ENCODE measurements at regions of chr10 and their contacts with region 1.

Region 1: GRCh38 chr10:128011175-128011979 is 104.5 kb downstream of the PTPRE start:
- DNase-seq: peak; percentile 95
- H3K4me3 ChIP-seq: peak overlapping the region in 1 of 2 experiments; percentile 22; a peak in 2 of 4 replicates
- H3K27ac ChIP-seq: no peak overlapping the region
- H3K4me1 ChIP-seq: peaks cover 0 to 7% of the 10 kb centered on the region in 2 experiments; a peak in 1 of 4 replicates
- H3K27me3 ChIP-seq: no peaks in the 10 kb centered on the region
- CTCF ChIP-seq: peak; percentile 96
- EP300 ChIP-seq: no peak
- RAD21 ChIP-seq: peak; percentile 97

Region 2: GRCh38 chr10:127715782-127716378 is 295.5 kb before region 1 on chr10:
- CTCF ChIA-PET with region 1: interaction called, 16 read pairs
- POLR2A ChIA-PET with region 1: no interaction called
- DNase-seq: peak; percentile 32
- H3K4me3 ChIP-seq: no peak overlapping the region; a peak in 1 of 4 replicates
- H3K27ac ChIP-seq: no peak overlapping the region
- H3K4me1 ChIP-seq: no peaks in the 10 kb centered on the region
- H3K27me3 ChIP-seq: no peaks in the 10 kb centered on the region
- CTCF ChIP-seq: peak; percentile 51
- EP300 ChIP-seq: no peak
- RAD21 ChIP-seq: peak; percentile 65

Region 3: GRCh38 chr10:127840884-127841283 is 170.5 kb before region 1 on chr10:
- CTCF ChIA-PET with region 1: no interaction called
- POLR2A ChIA-PET with region 1: no interaction called
- DNase-seq: no peak
- H3K4me3 ChIP-seq: no peak overlapping the region
- H3K27ac ChIP-seq: no peak overlapping the region
- H3K4me1 ChIP-seq: no peaks in the 10 kb centered on the region; a peak in 1 of 4 replicates
- H3K27me3 ChIP-seq: peaks cover 6% of the 10 kb centered on the region; the same call in 1 of the 2 replicates
- CTCF ChIP-seq: no peak
- EP300 ChIP-seq: no peak
- RAD21 ChIP-seq: no peak

Region 4: DNA sequence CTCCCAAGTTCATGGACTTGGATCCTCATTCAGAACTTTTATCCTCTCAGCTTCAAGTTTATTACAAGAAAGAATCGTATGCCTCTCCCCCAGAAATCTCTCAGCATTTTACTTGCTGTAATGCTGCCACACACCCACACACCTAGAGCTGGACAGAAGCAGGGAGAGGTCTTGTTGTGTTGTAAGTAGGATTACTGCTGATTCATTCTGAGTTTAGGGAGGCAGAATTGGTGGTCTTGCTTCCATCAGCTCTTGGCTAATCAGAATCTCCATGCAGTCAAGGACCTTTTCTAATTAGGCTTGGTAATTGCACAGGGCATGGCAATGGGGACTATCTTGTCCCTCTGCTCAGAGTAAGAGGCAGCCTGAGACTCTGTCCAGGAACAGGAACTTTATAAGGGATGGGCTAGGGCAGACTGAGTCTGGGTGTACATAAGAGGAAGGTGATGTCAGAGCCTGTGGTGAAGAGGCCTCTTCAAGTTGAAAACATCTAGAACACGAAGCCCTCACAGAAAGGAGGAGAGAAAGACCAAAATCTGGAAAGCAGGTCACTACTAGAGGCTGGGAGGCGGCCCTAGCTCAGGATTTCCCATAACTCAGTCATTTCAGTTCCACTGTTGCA is 111.5 kb before region 1 on chr10:
- CTCF ChIA-PET with region 1: interaction called, 389 read pairs
- POLR2A ChIA-PET with region 1: no interaction called
- DNase-seq: no peak
- H3K4me3 ChIP-seq: no peak overlapping the region
- H3K27ac ChIP-seq: no peak overlapping the region
- H3K4me1 ChIP-seq: no peaks in the 10 kb centered on the region
- H3K27me3 ChIP-seq: no peaks in the 10 kb centered on the region
- CTCF ChIP-seq: no peak
- EP300 ChIP-seq: no peak
- RAD21 ChIP-seq: no peak

Region 5: DNA sequence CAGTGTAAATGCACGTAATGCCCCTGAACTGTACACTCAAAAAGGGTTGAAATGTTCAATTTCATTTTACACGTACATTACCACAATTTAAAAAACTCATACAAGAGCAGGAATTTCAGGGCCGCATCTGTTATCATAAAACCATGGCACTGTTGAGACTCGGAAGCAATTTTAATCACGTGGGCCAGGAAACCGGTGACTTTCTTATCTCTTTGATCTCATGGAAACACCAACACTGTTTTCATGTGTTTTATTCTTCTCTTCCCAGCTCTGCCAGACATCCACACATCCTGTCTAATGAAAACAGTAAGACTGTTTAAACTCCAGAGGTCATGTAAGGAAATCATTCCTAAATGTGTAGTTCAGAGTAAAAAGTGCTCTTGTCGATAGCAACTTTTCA is 68.6 kb before region 1 on chr10:
- CTCF ChIA-PET with region 1: interaction called, 10 read pairs
- POLR2A ChIA-PET with region 1: no interaction called
- DNase-seq: peak; percentile 42
- H3K4me3 ChIP-seq: no peak overlapping the region
- H3K27ac ChIP-seq: peak overlapping the region; percentile 41 to 79; a peak in 3 of 4 replicates
- H3K4me1 ChIP-seq: peaks cover 3 to 28% of the 10 kb centered on the region in 2 experiments; a peak in 3 of 4 replicates
- H3K27me3 ChIP-seq: no peaks in the 10 kb centered on the region
- CTCF ChIP-seq: no peak
- EP300 ChIP-seq: no peak; a peak in 1 of 4 replicates
- RAD21 ChIP-seq: no peak

Region 6: DNA sequence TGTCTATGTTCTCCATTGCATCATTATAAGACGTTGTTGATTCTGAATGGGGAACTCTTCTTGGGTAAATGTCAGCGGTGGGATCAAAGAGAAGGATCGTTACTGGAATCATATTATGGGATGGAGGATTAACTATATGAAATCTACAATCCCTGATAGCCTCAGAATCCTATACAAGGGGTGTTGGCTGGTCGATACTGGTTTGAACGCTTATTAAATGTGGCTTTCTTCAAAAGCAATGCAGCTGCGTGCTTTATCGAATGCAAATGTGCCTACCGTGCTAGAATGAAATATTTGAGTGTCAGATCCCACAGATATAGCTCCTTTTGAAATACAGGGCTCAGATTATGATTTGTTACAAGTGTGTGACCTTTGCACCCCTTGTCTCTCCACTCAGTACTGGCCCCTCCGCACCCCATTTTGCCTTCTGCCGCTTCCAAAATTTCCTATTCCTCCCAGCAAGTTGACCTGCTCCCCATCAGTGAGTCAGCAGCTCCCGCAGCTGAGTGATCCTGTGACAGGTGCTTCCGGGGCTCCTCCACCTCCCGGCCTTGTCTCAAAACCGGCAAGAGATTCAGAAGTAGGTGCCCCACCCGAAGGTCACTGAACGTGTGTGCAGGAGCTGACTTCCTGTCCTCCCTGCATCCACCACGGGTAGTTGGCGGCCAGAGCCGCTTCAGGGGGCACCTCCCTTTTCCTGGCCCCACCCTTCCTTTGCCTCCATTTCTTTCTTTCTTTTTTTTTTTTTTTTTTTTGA is 27.9 kb before region 1 on chr10:
- CTCF ChIA-PET with region 1: interaction called, 45 read pairs
- POLR2A ChIA-PET with region 1: no interaction called
- DNase-seq: no peak
- H3K4me3 ChIP-seq: no peak overlapping the region
- H3K27ac ChIP-seq: no peak overlapping the region
- H3K4me1 ChIP-seq: no peaks in the 10 kb centered on the region
- H3K27me3 ChIP-seq: no peaks in the 10 kb centered on the region
- CTCF ChIP-seq: no peak
- EP300 ChIP-seq: no peak
- RAD21 ChIP-seq: no peak

Region 7: DNA sequence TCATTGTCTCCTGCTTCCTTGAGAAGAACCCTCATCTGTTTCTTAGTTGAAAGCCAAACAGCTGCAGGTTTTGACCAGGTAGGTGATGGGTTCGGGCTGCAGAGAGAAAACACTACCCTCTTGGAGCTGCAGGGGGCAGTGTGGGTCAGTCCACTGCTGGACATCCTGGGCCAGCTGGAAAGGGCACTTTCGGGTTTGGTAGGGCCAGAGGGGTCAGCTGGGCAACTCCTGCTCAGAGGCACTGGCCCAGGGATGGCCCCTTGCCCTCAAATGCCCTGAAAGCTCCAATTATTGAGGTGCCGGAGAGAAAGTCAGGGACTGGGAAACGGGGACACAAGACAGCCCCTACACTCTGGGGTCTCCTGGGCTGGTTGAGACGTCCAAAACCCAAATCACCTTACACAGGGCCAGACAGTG is 24.2 kb after region 1 on chr10:
- CTCF ChIA-PET with region 1: interaction called, 19 read pairs
- POLR2A ChIA-PET with region 1: no interaction called
- DNase-seq: peak; percentile 70
- H3K4me3 ChIP-seq: no peak overlapping the region
- H3K27ac ChIP-seq: no peak overlapping the region
- H3K4me1 ChIP-seq: 0 out of 4 replicates have a peak, but pooled peaks cover 0 to 5% of the 10 kb centered on the region in 2 experiments
- H3K27me3 ChIP-seq: no peaks in the 10 kb centered on the region
- CTCF ChIP-seq: peak; percentile 68
- EP300 ChIP-seq: no peak
- RAD21 ChIP-seq: peak; percentile 41; the same call in 1 of the 2 replicates

Region 8: GRCh38 chr10:128095027-128095752 is 83.8 kb after region 1 on chr10:
- CTCF ChIA-PET with region 1: no interaction called
- POLR2A ChIA-PET with region 1: no interaction called
- DNase-seq: no peak
- H3K4me3 ChIP-seq: no peak overlapping the region
- H3K27ac ChIP-seq: no peak overlapping the region
- H3K4me1 ChIP-seq: no peaks in the 10 kb centered on the region; a peak in 1 of 4 replicates
- H3K27me3 ChIP-seq: no peaks in the 10 kb centered on the region
- CTCF ChIP-seq: no peak
- EP300 ChIP-seq: no peak
- RAD21 ChIP-seq: no peak

Region 9: DNA sequence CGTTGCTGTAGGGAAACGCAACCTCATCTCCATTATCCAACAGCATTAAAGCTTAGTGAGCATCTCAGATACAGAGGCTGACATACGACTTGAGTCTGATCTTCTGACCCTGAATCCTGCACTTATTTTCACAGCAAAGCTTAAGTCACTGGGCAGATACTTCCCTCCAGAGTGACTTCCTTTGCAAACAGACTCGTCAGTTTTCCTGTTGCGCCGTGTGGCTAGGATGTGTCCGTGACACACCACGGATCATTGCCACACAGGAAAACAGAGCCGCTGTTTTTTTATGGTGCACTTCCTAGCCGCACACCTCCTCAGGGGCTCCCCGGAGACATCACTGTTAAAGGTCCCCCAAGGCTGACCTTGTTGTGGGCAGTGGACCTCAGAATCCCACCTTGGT is 209.7 kb after region 1 on chr10:
- CTCF ChIA-PET with region 1: no interaction called
- POLR2A ChIA-PET with region 1: no interaction called
- DNase-seq: no peak
- H3K4me3 ChIP-seq: no peak overlapping the region
- H3K27ac ChIP-seq: no peak overlapping the region
- H3K4me1 ChIP-seq: no peaks in the 10 kb centered on the region
- H3K27me3 ChIP-seq: no peaks in the 10 kb centered on the region
- CTCF ChIP-seq: no peak
- EP300 ChIP-seq: no peak
- RAD21 ChIP-seq: no peak

Measured in SK-N-SH (cell line).